ENCODE measurements at regions of chr18 and their contacts with region 1.

Region 1: DNA sequence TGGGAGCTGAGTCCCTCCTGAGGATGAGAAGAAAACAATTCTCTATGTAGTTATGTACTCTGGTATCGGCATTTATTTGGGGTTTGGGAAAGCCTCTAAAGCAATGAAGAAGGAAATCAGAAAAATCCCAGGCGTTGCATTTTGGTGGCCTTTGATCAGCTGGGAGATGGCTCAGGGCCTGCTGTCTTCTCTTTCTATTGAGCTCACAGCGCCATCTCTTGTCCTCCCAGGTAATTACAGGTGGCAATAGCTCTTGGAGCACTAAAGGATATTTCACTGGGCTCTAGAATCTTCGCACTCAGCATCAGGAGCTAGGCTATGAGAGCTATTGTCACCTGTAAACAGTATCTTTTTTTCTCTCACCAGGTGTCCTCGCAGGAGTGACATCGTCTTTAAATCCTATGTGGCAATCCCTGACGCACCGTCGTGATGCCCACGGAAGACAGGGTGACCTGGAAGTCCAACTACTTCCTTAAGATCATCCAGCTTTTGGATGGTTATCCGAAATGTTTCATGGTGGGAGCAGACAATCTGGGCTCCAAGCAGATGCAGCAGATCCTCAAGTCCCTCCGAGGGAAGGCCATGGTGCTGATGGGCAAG is 76.1 kb upstream of the PMAIP1 start:
- DNase-seq: peak; percentile 67
- ATAC-seq: peak; percentile 97
- H3K4me3 ChIP-seq: no peak overlapping the region
- H3K27ac ChIP-seq: no peak overlapping the region
- H3K4me1 ChIP-seq: no peaks in the 10 kb centered on the region
- H3K27me3 ChIP-seq: no peaks in the 10 kb centered on the region
- CTCF ChIP-seq: peak; percentile 81 to 89 (median 82)
- POLR2A ChIP-seq: no peak
- RAD21 ChIP-seq: peak; percentile 91

Region 2: DNA sequence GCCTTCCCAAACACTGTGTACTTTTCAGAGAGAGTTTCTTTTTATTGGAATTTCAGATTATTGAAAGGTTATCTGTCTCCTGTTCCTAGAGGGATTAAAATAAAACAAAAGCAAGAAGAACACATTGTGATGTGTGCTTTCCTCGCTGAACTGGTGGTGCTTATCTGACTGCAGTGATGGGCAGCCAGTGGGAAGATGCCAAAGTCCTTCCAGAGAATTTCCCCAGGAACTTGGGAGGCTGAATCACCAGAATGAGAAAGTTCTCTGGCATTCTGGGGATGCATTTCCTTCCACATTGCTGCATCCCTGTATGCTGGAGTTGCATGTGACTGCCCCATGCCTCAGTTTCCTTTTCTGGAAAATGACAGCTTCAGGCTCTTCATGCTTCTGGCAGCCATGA is 737.9 kb before region 1 on chr18:
- CTCF ChIA-PET with region 1: interaction called, 4 read pairs
- POLR2A ChIA-PET with region 1: no interaction called
- RAD21 ChIA-PET with region 1: no interaction called
- intact Hi-C with region 1: loop called (anchors 10 kb)
- DNase-seq: no peak
- ATAC-seq: no peak
- H3K4me3 ChIP-seq: no peak overlapping the region
- H3K27ac ChIP-seq: no peak overlapping the region
- H3K4me1 ChIP-seq: no peaks in the 10 kb centered on the region
- H3K27me3 ChIP-seq: peaks cover 4% of the 10 kb centered on the region
- CTCF ChIP-seq: no peak
- POLR2A ChIP-seq: no peak
- RAD21 ChIP-seq: no peak

Region 3: DNA sequence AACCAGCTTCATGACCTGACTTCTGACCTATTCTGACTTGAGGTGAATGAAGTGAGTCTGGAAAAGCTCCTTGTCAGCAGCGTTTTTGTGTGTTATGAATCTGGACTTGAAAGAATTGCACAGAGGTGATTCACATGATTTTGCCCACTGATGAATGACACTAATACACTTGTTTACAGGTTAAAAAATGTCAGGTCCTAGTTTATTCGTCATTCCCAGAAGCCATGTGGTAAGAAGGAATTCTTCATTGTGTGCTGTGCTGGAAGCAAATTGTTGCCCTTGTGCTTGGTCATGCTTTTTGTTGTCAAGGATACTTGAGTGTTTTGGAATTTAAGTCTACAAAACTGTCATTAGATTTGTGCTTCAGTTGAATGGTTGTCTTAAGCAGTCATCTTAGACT is 668.5 kb before region 1 on chr18:
- CTCF ChIA-PET with region 1: no interaction called
- POLR2A ChIA-PET with region 1: no interaction called
- RAD21 ChIA-PET with region 1: no interaction called
- intact Hi-C with region 1: no loop called
- DNase-seq: no peak
- ATAC-seq: no peak
- H3K4me3 ChIP-seq: no peak overlapping the region
- H3K27ac ChIP-seq: no peak overlapping the region
- H3K4me1 ChIP-seq: no peaks in the 10 kb centered on the region
- H3K27me3 ChIP-seq: no peaks in the 10 kb centered on the region
- CTCF ChIP-seq: no peak
- POLR2A ChIP-seq: no peak
- RAD21 ChIP-seq: no peak

Region 4: DNA sequence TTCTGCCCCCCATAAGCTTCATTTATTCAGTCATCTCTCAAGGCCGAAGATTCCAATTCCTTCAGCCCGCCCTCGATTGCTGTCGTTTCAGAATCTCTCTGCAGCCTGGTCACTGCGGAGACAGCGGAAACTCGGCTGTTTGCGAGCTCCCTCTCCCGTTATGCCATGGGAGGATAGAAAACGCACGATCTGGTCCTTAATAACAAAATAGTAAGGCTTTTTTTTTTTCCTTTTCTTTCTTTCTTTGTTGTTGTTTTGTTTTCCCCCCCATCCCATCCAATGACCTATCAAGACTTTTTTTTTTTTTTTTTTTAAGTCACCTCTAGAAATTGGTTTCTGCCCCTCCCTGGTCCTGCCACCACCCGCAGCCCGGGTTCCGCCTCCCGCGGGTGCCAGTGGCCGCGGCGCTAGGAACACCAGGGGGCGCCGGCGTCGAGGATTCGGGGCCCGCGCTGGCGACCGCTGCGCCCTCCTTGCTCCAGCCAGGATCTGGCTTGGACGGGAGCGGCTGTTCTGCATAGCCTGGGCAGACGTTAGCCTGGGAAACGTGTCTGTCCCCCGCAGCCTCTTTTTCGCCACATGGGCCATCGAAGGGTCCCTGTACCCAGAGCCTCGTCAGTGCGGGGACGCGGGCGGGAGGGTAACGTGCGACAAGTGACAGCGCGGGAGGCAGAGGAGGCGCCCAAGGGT is 515.3 kb before region 1 on chr18:
- CTCF ChIA-PET with region 1: interaction called, 12 read pairs
- POLR2A ChIA-PET with region 1: no interaction called
- RAD21 ChIA-PET with region 1: no interaction called
- intact Hi-C with region 1: no loop called
- DNase-seq: peak; percentile 43
- ATAC-seq: peak; percentile 96
- H3K4me3 ChIP-seq: peak overlapping the region; percentile 40 to 54
- H3K27ac ChIP-seq: no peak overlapping the region
- H3K4me1 ChIP-seq: peaks cover 0 to 22% of the 10 kb centered on the region in 2 experiments; a peak in 3 of 4 replicates
- H3K27me3 ChIP-seq: no peaks in the 10 kb centered on the region
- CTCF ChIP-seq: peak; percentile 80 to 97 (median 88)
- POLR2A ChIP-seq: no peak
- RAD21 ChIP-seq: peak; percentile 86

Region 5: GRCh38 chr18:59459369-59460079 is 364.2 kb before region 1 on chr18:
- CTCF ChIA-PET with region 1: interaction called, 112 read pairs
- POLR2A ChIA-PET with region 1: interaction called, 3 read pairs
- RAD21 ChIA-PET with region 1: interaction called, 8 to 9 read pairs
- intact Hi-C with region 1: loop called (anchors 1 kb)
- DNase-seq: peak; percentile 10
- ATAC-seq: peak; percentile 69
- H3K4me3 ChIP-seq: no peak overlapping the region
- H3K27ac ChIP-seq: no peak overlapping the region
- H3K4me1 ChIP-seq: no peaks in the 10 kb centered on the region
- H3K27me3 ChIP-seq: peaks cover 16% of the 10 kb centered on the region
- CTCF ChIP-seq: peak; percentile 43 to 65 (median 49); a peak in 4 of 6 replicates
- POLR2A ChIP-seq: no peak
- RAD21 ChIP-seq: peak; percentile 71

Region 6: GRCh38 chr18:59697236-59697932 is 126.3 kb before region 1 on chr18 and contains the start of gene CCBE1:
- CTCF ChIA-PET with region 1: interaction called, 47 read pairs
- POLR2A ChIA-PET with region 1: interaction called, 4 read pairs
- RAD21 ChIA-PET with region 1: interaction called, 7 to 9 read pairs
- intact Hi-C with region 1: loop called (anchors 1 kb)
- DNase-seq: peak; percentile 29
- ATAC-seq: peak; percentile 92
- H3K4me3 ChIP-seq: peak within 1 kb of the TSS; percentile 50 to 61
- H3K27ac ChIP-seq: no peak within 1 kb of the TSS; the same call in 1 of the 2 replicates
- H3K4me1 ChIP-seq: peaks cover 4 to 10% of the 10 kb centered on the region in 2 experiments; a peak in 2 of 4 replicates
- H3K27me3 ChIP-seq: peaks cover under 1% of the 10 kb centered on the region; the same call in 1 of the 2 replicates
- CTCF ChIP-seq: peak; percentile 70 to 97 (median 92); a peak in 5 of 6 replicates
- POLR2A ChIP-seq: no peak
- RAD21 ChIP-seq: peak; percentile 57
- total RNA-seq, gene CCBE1: 0.84 TPM

Region 7: DNA sequence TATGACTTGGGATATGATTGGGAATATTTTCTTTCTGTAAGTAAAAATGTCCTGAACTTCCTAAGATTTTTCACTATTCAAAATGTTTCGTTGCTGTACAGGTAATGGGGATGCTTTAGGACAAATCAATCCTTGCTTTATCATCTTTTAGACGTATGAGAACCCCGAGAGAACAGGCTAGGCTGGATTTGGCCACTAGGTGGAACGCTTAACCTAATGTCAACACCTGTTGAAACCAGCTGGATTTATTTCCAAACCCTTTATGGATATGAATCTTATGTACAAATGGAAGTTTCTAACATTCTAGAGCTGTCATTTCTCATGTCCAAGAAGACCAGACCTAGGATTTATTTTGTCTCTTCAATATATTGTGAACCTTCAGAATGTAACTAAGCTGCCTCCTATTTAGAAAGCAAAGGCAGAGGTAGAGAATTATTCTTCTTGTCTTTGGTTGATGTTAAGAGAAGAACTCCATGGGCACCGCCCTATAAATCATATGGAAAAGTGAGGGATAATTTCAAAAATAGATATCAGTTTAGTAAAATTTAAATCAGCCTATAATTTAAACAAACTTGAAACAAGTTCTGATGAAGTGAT is 172.8 kb after region 1 on chr18:
- CTCF ChIA-PET with region 1: interaction called, 11 read pairs
- POLR2A ChIA-PET with region 1: no interaction called
- RAD21 ChIA-PET with region 1: no interaction called
- intact Hi-C with region 1: no loop called
- DNase-seq: peak; percentile 59
- ATAC-seq: peak; percentile 84
- H3K4me3 ChIP-seq: no peak overlapping the region
- H3K27ac ChIP-seq: no peak overlapping the region
- H3K4me1 ChIP-seq: peaks cover 6 to 11% of the 10 kb centered on the region in 2 experiments; a peak in 3 of 4 replicates
- H3K27me3 ChIP-seq: no peaks in the 10 kb centered on the region
- CTCF ChIP-seq: peak; percentile 76 to 90 (median 85)
- POLR2A ChIP-seq: no peak
- RAD21 ChIP-seq: peak; percentile 87